Body of pancreas (tissue), 4 donors: ENCODE measurements at regions of chr1 and their contacts with region 1.

Region 1: GRCh38 chr1:202710070-202711045 is at the start of gene SYT2:
- DNase-seq: peak; percentile 40 to 55 (median 50)
- ATAC-seq: peak; percentile 73
- H3K4me3 ChIP-seq: no peak within 1 kb of the TSS
- H3K27ac ChIP-seq: no peak within 1 kb of the TSS
- H3K4me1 ChIP-seq: peaks cover 17% of the 10 kb centered on the region
- H3K27me3 ChIP-seq: peaks cover 0 to 27% of the 10 kb centered on the region in 2 donors
- CTCF ChIP-seq: no peak
- POLR2A ChIP-seq: no peak
- total RNA-seq, gene SYT2: not detected

Region 2: DNA sequence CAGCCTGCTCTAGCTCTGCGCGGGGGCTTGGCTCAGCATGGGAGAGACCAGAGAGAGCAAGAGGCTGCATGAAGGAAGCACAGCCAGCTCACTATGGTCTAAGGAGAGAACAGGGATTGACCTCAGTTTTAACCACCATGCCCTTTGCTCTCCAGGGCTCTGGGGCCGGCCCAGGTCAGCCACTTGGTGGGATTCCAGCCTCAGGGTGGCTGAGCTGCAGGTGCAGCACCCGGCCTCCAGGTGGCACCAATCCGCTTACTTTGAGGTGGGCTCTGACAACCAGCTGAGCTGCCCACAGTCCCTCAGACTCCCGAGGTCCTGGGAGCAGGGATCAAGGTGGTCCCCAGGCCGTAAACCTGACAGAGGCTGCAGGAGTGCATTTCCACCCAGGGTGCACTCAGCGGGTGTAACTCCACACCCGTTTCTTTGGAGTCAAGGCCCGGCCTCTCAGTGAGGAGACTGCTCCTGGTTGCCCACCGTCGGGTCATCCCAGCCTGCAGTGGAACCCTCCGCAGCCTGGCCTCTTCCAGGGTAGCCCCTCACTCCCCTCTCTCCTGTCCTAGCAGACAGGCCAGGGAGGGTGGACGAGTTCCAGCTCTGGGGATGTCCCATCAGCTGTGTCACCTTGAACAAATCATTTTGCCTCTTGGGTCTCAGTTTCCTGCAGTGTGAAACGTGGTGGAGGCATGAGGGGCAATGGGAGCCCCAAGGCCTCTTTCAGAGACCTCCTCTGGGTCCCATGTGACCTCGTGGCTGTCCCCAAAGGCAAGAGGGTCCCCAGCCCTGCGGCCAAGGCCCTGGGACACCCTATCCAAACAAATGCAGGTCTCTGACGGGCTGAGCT is 517.4 kb before region 1 on chr1:
- intact Hi-C with region 1: loop called (anchors 5 kb)
- DNase-seq: peak; percentile 55 to 67 (median 60)
- ATAC-seq: peak; percentile 67
- H3K4me3 ChIP-seq: no peak overlapping the region
- H3K27ac ChIP-seq: no peak overlapping the region
- H3K4me1 ChIP-seq: peaks cover 13% of the 10 kb centered on the region
- H3K27me3 ChIP-seq: peaks cover 0 to 11% of the 10 kb centered on the region in 2 donors
- CTCF ChIP-seq: peak; percentile 62 to 85 (median 65)
- POLR2A ChIP-seq: no peak

Region 3: DNA sequence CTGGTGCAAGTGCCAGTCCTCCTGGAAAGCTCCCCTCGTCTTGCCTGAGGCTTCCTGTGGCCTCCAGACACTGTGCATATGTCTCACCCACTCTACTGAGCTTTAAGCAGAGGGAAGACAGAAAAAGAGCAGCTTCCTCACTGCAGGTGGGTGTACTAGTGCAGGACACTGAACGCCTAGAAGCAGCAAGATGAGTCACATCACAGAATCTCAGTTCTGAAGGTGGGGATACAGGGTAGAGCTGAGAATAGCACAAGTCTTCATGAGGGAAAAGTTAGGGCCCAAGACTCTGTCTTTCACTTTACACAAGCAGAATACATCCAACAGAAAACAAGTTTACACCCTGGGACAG is 137.8 kb after region 1 on chr1:
- intact Hi-C with region 1: no loop called
- DNase-seq: no peak
- ATAC-seq: no peak
- H3K4me3 ChIP-seq: no peak overlapping the region
- H3K27ac ChIP-seq: no peak overlapping the region
- H3K4me1 ChIP-seq: no peaks in the 10 kb centered on the region
- H3K27me3 ChIP-seq: no peaks in the 10 kb centered on the region
- CTCF ChIP-seq: no peak
- POLR2A ChIP-seq: no peak